Right ventricle myocardium superior (tissue), 1 donor: ENCODE measurements at regions of chr20 and their contacts with region 1.

Region 1: DNA sequence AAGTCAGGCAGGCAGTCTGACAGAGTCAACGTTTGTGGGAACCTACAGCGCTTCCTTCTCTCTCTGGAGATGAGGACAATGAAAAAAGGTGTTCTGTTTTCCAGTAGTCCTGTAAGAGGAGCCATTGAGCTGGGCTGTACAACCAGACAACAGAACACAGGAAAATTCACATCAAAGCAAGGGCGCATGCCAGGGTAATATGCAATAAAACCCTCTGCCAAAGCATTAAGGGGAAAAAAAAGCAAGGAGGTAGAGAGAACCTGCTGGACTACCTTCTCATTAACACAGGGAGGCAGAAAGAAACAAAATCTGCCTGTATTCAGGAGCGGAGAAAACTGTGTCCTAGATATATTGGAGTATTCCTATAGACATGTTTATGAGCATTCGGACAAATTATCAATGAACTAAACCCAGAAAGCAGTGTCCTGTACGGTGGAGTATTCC is 1.3 kb downstream of the RNF24 start:
- DNase-seq: no peak
- ATAC-seq: peak; percentile 51

Region 2: GRCh38 chr20:3727401-3728021 is 286.5 kb before region 1 on chr20:
- intact Hi-C with region 1: no loop called
- DNase-seq: peak; percentile 50
- ATAC-seq: peak; percentile 52

Region 3: DNA sequence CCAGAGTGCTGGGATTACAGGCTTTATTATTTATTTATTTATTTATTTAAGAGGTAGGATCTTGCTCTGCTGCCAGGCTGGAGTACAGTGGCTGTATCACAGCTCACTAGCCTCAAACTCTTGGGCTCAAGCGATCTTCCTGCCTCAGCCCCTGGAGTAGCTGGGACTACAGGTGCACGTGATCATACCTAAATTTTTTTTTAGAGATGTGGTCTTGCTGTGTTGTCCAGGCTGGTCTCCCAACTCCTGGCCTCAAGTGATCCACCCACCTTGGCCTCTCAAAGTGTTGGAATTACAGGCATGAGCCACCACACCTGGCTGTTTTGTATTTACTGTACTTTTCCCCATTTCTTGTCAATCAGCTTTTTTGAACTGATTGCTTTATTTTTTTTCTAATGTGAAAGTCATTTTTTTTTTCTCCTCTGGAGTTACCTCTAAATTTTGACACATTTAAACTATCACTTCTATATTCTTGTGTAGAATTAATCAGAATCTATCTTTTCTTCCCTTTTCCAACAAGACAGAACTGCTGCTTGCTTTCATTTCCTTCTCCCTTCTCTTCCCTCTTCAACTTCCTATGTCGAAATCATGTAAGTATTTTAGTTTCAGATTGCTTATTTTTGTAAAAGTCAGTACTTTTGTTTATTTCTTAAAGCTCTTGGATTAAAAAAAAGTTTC is 112.9 kb before region 1 on chr20:
- intact Hi-C with region 1: loop called (anchors 10 kb)
- DNase-seq: no peak
- ATAC-seq: no peak

Region 4: DNA sequence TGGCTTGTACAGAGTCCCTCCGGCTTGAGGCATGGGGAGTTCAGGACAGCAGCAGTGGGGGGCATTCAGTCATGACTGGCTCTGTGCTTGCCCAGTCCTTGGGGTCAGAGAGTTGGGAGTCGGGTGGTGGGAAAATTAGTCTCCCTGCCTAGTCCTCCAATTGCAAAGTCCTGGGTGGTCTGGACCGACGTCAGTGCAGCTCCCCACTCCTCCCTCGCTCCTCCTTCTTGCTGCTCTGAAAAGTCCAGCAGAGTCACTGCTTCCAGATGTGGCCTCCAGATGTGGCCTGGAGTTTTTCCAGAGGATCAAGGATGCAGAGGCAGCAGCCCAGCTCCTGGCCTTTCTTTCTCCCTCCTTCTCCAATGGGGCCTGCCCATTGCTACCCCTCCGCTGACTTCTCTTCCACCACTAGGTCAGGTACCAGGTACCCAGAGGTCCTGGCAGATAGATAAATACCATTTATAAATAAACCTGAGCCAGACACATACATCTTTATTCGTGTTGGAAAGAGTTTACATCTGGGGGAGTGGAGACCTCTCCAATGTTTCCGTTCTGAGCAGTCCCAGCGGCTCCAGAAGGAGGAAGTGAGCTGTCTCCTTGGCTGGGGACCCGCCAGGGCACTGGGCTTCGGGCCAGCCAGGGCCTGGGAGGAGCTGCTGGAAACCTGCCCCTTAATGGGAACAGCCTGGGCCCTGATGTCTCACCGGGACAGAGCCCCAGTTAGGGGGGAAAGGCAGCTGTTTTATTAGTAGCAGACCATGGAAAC is 50.3 kb after region 1 on chr20:
- intact Hi-C with region 1: loop called (anchors 5 kb)
- DNase-seq: peak; percentile 95
- ATAC-seq: peak; percentile 93

Region 5: GRCh38 chr20:4084096-4084495 is 70.0 kb after region 1 on chr20:
- intact Hi-C with region 1: loop called (anchors 2 kb)
- DNase-seq: no peak
- ATAC-seq: no peak